Naive thymus-derived CD4-positive, alpha-beta T cell (primary cell): ENCODE measurements at regions of chr1 and their contacts with region 1.

Region 1: DNA sequence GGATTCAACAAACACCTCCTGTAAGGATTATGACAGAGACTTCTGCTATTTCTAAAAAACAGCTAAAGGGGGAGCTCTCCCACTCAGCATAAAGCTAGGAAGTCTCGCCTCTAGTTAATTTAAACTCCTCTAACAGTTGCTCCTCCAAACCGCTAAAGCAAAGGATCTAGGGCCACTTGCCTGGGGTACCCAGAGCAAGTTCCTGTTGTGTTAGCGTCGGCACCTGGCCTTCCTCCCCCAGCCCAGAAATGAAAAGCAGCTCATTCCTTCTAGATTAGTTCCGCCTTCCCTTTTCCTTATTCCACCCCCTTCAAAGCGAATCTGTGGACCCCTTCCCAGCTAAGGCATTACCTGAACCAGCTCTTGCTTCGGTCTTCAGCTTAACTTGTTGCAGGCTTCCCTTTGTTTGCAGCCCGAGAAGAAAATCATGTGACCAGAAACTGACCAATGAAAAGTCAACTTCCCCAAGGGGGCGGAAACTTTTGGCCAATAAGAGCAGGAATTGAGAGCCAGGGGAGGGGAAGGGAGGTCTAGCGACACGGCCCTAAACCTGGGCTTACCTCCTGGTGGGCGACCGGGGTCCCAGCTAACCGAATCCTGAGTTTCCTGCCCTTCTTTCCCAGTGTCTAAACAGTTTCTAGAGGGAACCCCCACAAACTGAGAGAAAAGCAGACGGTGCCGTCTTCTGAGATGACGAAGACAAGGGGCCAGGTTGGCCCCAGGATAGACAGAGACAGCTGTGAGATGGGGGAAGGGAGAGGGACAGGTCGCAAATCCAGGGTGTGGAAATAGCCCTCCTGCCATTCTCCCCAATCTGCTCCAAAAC is at the start of gene PBXIP1:
- DNase-seq: peak; percentile 56 to 95 (median 92)
- ATAC-seq: peak; percentile 58
- H3K4me3 ChIP-seq: peak within 1 kb of the TSS; percentile 92
- H3K4me3 Mint-ChIP-seq: peak within 1 kb of the TSS; percentile 92 to 99 (median 98)
- H3K27ac ChIP-seq: peak within 1 kb of the TSS; percentile 96
- H3K27ac Mint-ChIP-seq: peak within 1 kb of the TSS; percentile 97 to 100 (median 99)
- H3K4me1 ChIP-seq: peaks cover 53 to 54% of the 10 kb centered on the region in 2 donors
- H3K4me1 Mint-ChIP-seq: peaks cover 59 to 87% (median 76%) of the 10 kb centered on the region in 7 donors
- H3K27me3 ChIP-seq: no peaks in the 10 kb centered on the region
- H3K27me3 Mint-ChIP-seq: no peaks in the 10 kb centered on the region
- total RNA-seq, gene PBXIP1: 107 to 390 (median 383) TPM

Region 2: DNA sequence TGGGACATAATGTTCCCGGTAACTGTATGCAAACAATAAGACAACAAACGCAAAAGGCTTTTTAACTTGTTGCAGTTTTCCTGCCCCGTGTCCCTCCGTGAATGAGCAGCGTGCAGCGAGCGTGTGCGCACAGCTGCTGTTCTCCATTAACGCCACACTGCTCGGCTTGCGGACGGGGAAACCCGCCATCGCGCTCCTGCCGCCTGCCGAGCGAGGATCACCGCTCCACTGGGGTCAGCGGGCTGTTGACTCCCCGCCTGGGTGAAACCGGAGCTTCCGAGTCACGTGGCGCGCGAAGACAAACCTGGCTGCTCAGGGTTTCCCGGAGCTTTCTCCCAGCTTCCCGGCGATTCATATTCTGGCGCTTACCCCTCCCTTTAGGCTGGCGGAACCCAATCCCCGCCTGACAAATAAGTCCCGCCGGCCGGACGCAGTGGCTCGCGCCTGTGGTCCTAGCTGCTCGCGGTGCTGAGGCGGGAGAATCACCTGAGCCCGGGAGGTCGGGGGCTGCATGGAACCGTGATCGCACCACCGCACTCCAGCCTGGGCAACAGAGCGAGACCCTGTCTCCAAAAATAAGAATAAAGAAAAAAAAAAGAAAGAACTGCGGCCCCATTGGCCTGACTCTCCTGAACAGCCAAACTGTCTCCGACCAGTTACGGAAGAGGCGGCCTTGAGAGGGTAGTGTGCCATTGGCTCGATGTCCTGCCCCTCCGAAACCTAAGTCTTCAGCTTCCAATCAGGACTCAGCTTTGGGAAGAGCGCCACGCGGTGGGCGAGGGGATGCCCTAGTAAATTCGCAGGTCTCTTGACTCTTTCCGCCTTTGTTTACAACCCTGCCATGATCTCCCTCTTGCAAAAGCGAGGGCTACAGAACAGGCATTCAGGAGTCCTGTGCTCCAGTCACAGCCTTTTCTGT is 988.6 kb before region 1 on chr1 and contains the start of gene CREB3L4:
- CTCF ChIA-PET with region 1: no interaction called
- POLR2A ChIA-PET with region 1: no interaction called
- intact Hi-C with region 1: loop called in 1 of 2 experiments (anchors 10 kb)
- DNase-seq: peak; percentile 68 to 89 (median 84)
- ATAC-seq: peak; percentile 91
- H3K4me3 ChIP-seq: peak within 1 kb of the TSS; percentile 89
- H3K4me3 Mint-ChIP-seq: peak within 1 kb of the TSS; percentile 83 to 97 (median 92)
- H3K27ac ChIP-seq: peak within 1 kb of the TSS; percentile 79
- H3K27ac Mint-ChIP-seq: peak within 1 kb of the TSS; percentile 87 to 99 (median 94)
- H3K4me1 ChIP-seq: peaks cover 32 to 40% of the 10 kb centered on the region in 2 donors
- H3K4me1 Mint-ChIP-seq: peaks cover 27 to 72% (median 57%) of the 10 kb centered on the region in 7 donors
- H3K27me3 ChIP-seq: no peaks in the 10 kb centered on the region
- H3K27me3 Mint-ChIP-seq: no peaks in the 10 kb centered on the region
- total RNA-seq, gene CREB3L4: 4.6 to 8.4 (median 7.0) TPM

Region 3: DNA sequence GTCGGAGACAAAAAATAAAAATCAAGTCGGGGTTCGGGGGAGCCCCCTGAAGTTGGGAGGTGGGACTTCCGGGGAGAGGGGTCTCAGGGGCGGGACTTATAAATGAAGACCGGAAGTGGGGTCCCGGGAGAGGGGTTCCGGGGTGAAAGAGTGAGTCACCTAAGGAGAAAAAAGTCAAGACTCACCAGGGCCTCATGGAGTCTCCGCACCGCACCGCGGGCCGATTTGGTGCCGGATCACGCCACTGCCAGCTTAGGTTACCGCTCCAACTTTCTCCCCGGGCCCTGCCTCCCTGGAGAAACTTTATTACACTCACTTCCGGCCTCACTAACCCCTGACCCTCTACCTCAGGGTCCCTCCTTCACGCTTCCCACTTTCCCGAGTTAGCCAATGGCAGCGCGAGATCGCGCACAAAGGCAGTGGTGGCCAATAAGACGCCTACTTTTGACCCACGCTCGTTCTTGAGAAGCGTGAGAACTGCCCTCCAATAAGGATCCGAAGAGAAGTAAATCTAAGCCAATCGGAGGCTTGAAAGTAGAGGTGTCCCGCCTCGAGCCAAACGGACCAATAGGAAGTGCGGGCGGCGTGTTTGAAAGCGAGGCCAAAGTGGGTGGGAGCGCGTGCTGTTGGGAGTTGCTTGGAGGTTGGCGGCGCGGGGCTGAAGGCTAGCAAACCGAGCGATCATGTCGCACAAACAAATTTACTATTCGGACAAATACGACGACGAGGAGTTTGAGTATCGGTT is 18.3 kb after region 1 on chr1 and contains the start of gene CKS1B:
- CTCF ChIA-PET with region 1: interaction called, 3 read pairs
- POLR2A ChIA-PET with region 1: interaction called, 160 read pairs
- intact Hi-C with region 1: loop called (anchors 1 kb)
- DNase-seq: peak; percentile 86 to 100 (median 98)
- ATAC-seq: peak; percentile 89
- H3K4me3 ChIP-seq: peak within 1 kb of the TSS; percentile 82
- H3K4me3 Mint-ChIP-seq: no peak within 1 kb of the TSS
- H3K27ac ChIP-seq: peak within 1 kb of the TSS; percentile 94
- H3K27ac Mint-ChIP-seq: no peak within 1 kb of the TSS
- H3K4me1 ChIP-seq: peaks cover 28 to 35% of the 10 kb centered on the region in 2 donors
- H3K4me1 Mint-ChIP-seq: peaks cover 27 to 39% (median 31%) of the 10 kb centered on the region in 7 donors
- H3K27me3 ChIP-seq: no peaks in the 10 kb centered on the region
- H3K27me3 Mint-ChIP-seq: no peaks in the 10 kb centered on the region
- total RNA-seq, gene CKS1B: 8.4 to 105 (median 10.2) TPM

Region 4: GRCh38 chr1:154982897-154983648 is 27.1 kb after region 1 on chr1 and contains the start of gene FLAD1:
- CTCF ChIA-PET with region 1: interaction called, 3 read pairs
- POLR2A ChIA-PET with region 1: interaction called, 160 read pairs
- intact Hi-C with region 1: loop called (anchors 1 kb)
- DNase-seq: peak; percentile 71 to 98 (median 95)
- ATAC-seq: peak; percentile 99
- H3K4me3 ChIP-seq: peak within 1 kb of the TSS; percentile 64
- H3K4me3 Mint-ChIP-seq: no peak within 1 kb of the TSS
- H3K27ac ChIP-seq: peak within 1 kb of the TSS; percentile 77
- H3K27ac Mint-ChIP-seq: peak within 1 kb of the TSS in 3 of 9 donors; percentile 38 to 55 (median 41)
- H3K4me1 ChIP-seq: peaks cover 12 to 13% of the 10 kb centered on the region in 2 donors
- H3K4me1 Mint-ChIP-seq: peaks cover 0 to 24% (median 4%) of the 10 kb centered on the region in 7 donors
- H3K27me3 ChIP-seq: no peaks in the 10 kb centered on the region
- H3K27me3 Mint-ChIP-seq: no peaks in the 10 kb centered on the region
- total RNA-seq, gene FLAD1: 24.4 to 50.2 (median 50.0) TPM

Region 5: GRCh38 chr1:155044812-155045690 is 89.1 kb after region 1 on chr1:
- CTCF ChIA-PET with region 1: interaction called, 11 read pairs
- POLR2A ChIA-PET with region 1: no interaction called
- intact Hi-C with region 1: no loop called
- DNase-seq: peak in 7 of 9 donors; percentile 49 to 70 (median 58)
- ATAC-seq: peak; percentile 96
- H3K4me3 ChIP-seq: no peak overlapping the region
- H3K4me3 Mint-ChIP-seq: no peak overlapping the region
- H3K27ac ChIP-seq: no peak overlapping the region
- H3K27ac Mint-ChIP-seq: peak overlapping the region in 1 of 9 donors; percentile 52
- H3K4me1 ChIP-seq: no peaks in the 10 kb centered on the region
- H3K4me1 Mint-ChIP-seq: peaks cover 4 to 21% (median 14%) of the 10 kb centered on the region in 7 donors
- H3K27me3 ChIP-seq: no peaks in the 10 kb centered on the region
- H3K27me3 Mint-ChIP-seq: peaks cover 0 to 4% (median 0%) of the 10 kb centered on the region in 5 donors

Region 6: GRCh38 chr1:155352631-155353030 is 396.7 kb after region 1 on chr1:
- CTCF ChIA-PET with region 1: no interaction called
- POLR2A ChIA-PET with region 1: no interaction called
- intact Hi-C with region 1: no loop called
- DNase-seq: no peak
- ATAC-seq: no peak
- H3K4me3 ChIP-seq: no peak overlapping the region
- H3K4me3 Mint-ChIP-seq: no peak overlapping the region
- H3K27ac ChIP-seq: no peak overlapping the region
- H3K27ac Mint-ChIP-seq: peak overlapping the region in 6 of 9 donors; percentile 6 to 66 (median 50)
- H3K4me1 ChIP-seq: no peaks in the 10 kb centered on the region
- H3K4me1 Mint-ChIP-seq: no peaks in the 10 kb centered on the region
- H3K27me3 ChIP-seq: no peaks in the 10 kb centered on the region
- H3K27me3 Mint-ChIP-seq: no peaks in the 10 kb centered on the region